Activated CD4-positive, alpha-beta T cell treated with anti-CD3 and anti-CD28 coated beads for 36 hours (primary cell): ENCODE measurements at regions of chr15 and their contacts with region 1.

Region 1: GRCh38 chr15:63805993-63806980 is 27.5 kb downstream of the HERC1 start:
- DNase-seq: peak; percentile 34
- ATAC-seq: peak; percentile 77
- H3K4me3 Mint-ChIP-seq: no peak overlapping the region
- H3K27ac Mint-ChIP-seq: peak overlapping the region; percentile 78
- H3K4me1 Mint-ChIP-seq: peaks cover 83% of the 10 kb centered on the region
- H3K27me3 Mint-ChIP-seq: no peaks in the 10 kb centered on the region

Region 2: DNA sequence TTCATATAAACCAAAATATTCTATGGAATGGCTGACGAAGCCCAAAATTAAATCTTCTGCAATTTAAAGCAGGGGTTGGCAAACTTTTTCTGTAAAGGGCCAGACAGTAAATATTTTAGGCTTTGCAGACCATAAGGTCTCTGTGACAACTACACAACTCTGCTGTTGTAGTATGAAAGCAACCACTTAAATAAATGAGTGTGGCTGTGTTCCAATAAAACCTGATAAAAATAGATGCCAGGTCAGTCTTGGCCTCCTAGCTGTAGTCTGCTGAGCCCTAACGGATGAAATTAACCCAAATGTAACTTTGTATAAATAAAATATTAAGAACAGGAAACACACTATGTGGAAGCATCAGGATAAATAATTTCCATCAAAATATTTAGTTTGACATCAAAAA is 104.9 kb before region 1 on chr15:
- CTCF ChIA-PET with region 1: no interaction called
- POLR2A ChIA-PET with region 1: no interaction called
- intact Hi-C with region 1: no loop called
- DNase-seq: no peak
- ATAC-seq: no peak
- H3K4me3 Mint-ChIP-seq: no peak overlapping the region
- H3K27ac Mint-ChIP-seq: no peak overlapping the region
- H3K4me1 Mint-ChIP-seq: peaks cover 8% of the 10 kb centered on the region
- H3K27me3 Mint-ChIP-seq: no peaks in the 10 kb centered on the region

Region 3: GRCh38 chr15:63791228-63791627 is 15.1 kb before region 1 on chr15:
- CTCF ChIA-PET with region 1: interaction called, 3 read pairs
- POLR2A ChIA-PET with region 1: no interaction called
- intact Hi-C with region 1: loop called in 1 of 2 experiments (anchors 2 kb)
- DNase-seq: no peak
- ATAC-seq: no peak
- H3K4me3 Mint-ChIP-seq: no peak overlapping the region
- H3K27ac Mint-ChIP-seq: peak overlapping the region; percentile 15
- H3K4me1 Mint-ChIP-seq: peaks cover 35% of the 10 kb centered on the region
- H3K27me3 Mint-ChIP-seq: no peaks in the 10 kb centered on the region

Region 4: GRCh38 chr15:63818191-63818590 is 11.9 kb after region 1 on chr15:
- CTCF ChIA-PET with region 1: interaction called, 11 read pairs
- POLR2A ChIA-PET with region 1: interaction called, 6 read pairs
- intact Hi-C with region 1: no loop called
- DNase-seq: no peak
- ATAC-seq: peak; percentile 49
- H3K4me3 Mint-ChIP-seq: no peak overlapping the region
- H3K27ac Mint-ChIP-seq: peak overlapping the region; percentile 83
- H3K4me1 Mint-ChIP-seq: peaks cover 81% of the 10 kb centered on the region
- H3K27me3 Mint-ChIP-seq: no peaks in the 10 kb centered on the region

Region 5: GRCh38 chr15:63933522-63933921 is 127.2 kb after region 1 on chr15:
- CTCF ChIA-PET with region 1: no interaction called
- POLR2A ChIA-PET with region 1: no interaction called
- intact Hi-C with region 1: no loop called
- DNase-seq: no peak
- ATAC-seq: no peak
- H3K4me3 Mint-ChIP-seq: no peak overlapping the region
- H3K27ac Mint-ChIP-seq: no peak overlapping the region
- H3K4me1 Mint-ChIP-seq: peaks cover 8% of the 10 kb centered on the region
- H3K27me3 Mint-ChIP-seq: no peaks in the 10 kb centered on the region